Mammary epithelial cell (primary cell): ENCODE measurements at regions of chr19 and their contacts with region 1.

Region 1: GRCh38 chr19:33416307-33417215 is 43.1 kb downstream of the CEBPG start:
- DNase-seq: peak; percentile 44
- H3K4me3 ChIP-seq: peak overlapping the region in 1 of 3 experiments; percentile 17
- H3K27ac ChIP-seq: no peak overlapping the region
- H3K4me1 ChIP-seq: peaks cover 5% of the 10 kb centered on the region
- H3K27me3 ChIP-seq: no peaks in the 10 kb centered on the region
- CTCF ChIP-seq: peak; percentile 72 to 73

Region 2: DNA sequence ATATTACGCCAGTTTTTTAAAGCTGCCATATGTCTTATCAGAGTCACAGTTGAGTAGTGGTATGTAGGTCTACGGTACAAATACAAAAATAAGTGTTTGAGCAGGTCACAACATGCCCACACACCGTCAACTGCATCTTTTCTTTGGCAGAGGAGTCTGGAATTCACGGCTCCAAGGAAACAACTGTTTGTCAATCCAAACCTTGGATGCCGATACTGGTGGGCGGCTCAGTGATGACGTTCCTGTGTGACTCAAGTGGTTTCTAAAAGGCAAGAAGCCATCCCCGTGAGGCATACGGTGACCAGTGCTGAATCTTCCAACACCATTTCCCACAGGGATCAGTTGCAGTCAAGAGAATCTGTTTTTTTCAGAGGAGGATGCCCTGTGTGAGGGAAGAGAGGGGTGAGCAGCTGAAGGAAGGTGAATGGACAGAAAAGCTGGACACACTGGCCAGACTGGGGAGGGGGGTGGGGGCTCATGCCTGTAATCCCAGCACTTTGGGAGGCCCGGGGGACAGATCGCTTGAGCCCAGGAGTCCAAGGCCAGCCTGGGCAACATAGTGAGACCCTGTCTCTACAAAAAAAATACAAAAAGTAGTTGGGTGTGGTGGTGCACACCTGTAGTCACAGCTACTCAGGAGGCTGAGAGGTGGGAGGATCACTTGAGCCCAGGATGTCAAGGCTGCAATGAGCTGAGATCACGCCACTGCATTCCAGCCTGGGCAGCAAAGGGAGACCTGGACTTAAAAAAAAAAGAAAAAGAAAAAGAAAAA is 65.8 kb before region 1 on chr19:
- CTCF ChIA-PET with region 1: no interaction called
- dilution Hi-C with region 1: loop called (anchors 5 kb)
- in situ Hi-C with region 1: no loop called
- intact Hi-C with region 1: no loop called
- DNase-seq: peak; percentile 100
- H3K4me3 ChIP-seq: peak overlapping the region in 1 of 3 experiments; percentile 6
- H3K27ac ChIP-seq: peak overlapping the region; percentile 81
- H3K4me1 ChIP-seq: peaks cover 17% of the 10 kb centered on the region
- H3K27me3 ChIP-seq: no peaks in the 10 kb centered on the region
- CTCF ChIP-seq: no peak

Region 3: GRCh38 chr19:33535226-33535625 is 118.7 kb after region 1 on chr19:
- CTCF ChIA-PET with region 1: no interaction called
- dilution Hi-C with region 1: loop called (anchors 5 kb)
- in situ Hi-C with region 1: no loop called
- intact Hi-C with region 1: no loop called
- DNase-seq: peak; percentile 63
- H3K4me3 ChIP-seq: no peak overlapping the region
- H3K27ac ChIP-seq: no peak overlapping the region
- H3K4me1 ChIP-seq: no peaks in the 10 kb centered on the region
- H3K27me3 ChIP-seq: no peaks in the 10 kb centered on the region
- CTCF ChIP-seq: no peak

Region 4: GRCh38 chr19:33921165-33921564 is 504.6 kb after region 1 on chr19:
- CTCF ChIA-PET with region 1: no interaction called
- dilution Hi-C with region 1: loop called (anchors 10 kb)
- in situ Hi-C with region 1: no loop called
- intact Hi-C with region 1: no loop called
- DNase-seq: no peak
- H3K4me3 ChIP-seq: no peak overlapping the region
- H3K27ac ChIP-seq: no peak overlapping the region
- H3K4me1 ChIP-seq: no peaks in the 10 kb centered on the region
- H3K27me3 ChIP-seq: no peaks in the 10 kb centered on the region
- CTCF ChIP-seq: no peak

Region 5: DNA sequence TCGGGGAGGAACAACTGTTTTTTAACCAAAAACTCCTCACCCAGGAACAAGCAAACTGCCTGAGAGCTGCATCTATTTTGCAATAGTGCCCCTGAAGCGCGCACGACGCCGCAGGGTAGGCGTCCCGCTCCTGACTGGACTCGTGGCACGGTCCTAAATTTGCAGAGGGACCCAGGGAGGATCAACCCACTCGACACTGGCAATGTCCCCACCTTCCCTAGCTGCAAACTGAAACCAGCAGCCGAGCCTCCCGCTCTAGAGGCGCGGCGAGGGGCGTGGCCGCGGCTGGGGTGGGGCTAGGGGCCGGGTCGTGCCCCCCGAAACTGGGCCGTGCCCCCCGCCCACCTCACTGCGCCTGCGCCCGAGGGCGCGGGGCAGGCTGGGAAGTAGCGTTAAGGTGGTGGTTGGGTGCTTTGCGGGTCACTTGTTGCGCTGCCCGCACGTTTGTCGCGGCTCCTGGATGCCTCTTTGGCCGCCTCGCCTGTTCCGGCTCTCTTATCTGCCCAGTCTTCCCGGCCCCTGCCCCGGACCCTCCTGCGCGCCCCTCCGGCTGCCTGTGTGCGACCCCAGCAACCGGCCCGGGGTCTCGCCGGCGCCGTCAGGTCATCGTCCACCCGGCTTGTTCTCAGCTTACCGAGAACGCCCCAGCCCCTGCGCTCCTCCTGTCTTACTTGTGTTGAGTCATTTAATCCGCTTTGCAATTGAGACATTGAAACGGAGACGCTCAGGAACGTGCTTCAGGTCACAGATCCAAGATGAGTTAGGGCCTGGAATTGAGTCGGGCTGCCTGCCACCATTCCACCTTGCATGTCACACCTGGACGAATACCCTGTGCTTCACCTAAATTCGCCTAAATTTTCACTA is 717.9 kb after region 1 on chr19:
- CTCF ChIA-PET with region 1: no interaction called
- dilution Hi-C with region 1: loop called (anchors 5 kb)
- in situ Hi-C with region 1: no loop called
- intact Hi-C with region 1: no loop called
- DNase-seq: peak; percentile 59
- H3K4me3 ChIP-seq: peak overlapping the region; percentile 59 to 66 (median 62)
- H3K27ac ChIP-seq: peak overlapping the region; percentile 26
- H3K4me1 ChIP-seq: no peaks in the 10 kb centered on the region
- H3K27me3 ChIP-seq: no peaks in the 10 kb centered on the region
- CTCF ChIP-seq: no peak